ENCODE measurements at regions of chr6 and their contacts with region 1.

Region 1: DNA sequence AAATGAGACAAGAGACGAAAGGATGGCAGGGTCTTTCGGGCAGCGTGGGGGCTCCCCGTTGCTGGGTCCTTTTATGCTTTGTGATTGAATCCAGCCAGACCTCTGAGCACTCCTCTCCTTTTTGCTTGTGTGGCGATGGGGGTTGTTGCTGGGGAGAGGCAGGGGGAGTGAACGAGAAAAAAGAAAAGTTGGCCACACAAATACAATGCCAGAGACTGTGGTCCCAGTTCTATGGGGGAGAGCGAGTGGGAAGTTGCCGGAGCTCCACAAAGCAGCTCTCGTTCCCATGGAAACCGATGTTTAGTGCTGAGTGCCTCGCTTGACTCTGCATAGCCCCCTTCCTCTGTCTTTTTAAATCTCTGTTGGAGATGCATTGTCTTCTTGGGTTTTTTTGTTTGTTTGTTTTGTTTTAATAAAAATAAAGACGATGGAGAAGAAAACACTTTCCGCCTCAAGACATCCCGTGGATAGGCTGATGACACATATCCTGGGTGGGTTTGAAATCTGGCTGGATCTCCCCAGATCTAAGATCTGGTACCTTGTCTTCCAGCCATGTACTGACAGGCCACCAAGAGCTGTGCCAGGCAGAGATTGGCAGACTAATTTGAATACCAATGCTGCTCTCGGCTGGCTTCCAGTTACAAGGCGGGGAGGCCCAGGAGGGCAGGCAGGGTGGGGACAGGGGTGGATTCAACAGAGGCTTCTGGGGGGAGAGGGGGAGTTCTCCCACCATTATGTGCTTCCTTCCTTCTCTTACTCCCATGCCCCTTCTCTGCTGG is 529.3 kb downstream of the QKI start:
- DNase-seq: peak; percentile 57 to 94 (median 70)

Region 2: GRCh38 chr6:163427498-163428254 is 516.1 kb before region 1 on chr6:
- intact Hi-C with region 1: loop called (anchors 5 kb)
- DNase-seq: no peak

Measured in posterior cingulate gyrus (tissue), 11 donors.